K562 (cell line): ENCODE measurements at regions of chrX and their contacts with region 1.

Region 1: DNA sequence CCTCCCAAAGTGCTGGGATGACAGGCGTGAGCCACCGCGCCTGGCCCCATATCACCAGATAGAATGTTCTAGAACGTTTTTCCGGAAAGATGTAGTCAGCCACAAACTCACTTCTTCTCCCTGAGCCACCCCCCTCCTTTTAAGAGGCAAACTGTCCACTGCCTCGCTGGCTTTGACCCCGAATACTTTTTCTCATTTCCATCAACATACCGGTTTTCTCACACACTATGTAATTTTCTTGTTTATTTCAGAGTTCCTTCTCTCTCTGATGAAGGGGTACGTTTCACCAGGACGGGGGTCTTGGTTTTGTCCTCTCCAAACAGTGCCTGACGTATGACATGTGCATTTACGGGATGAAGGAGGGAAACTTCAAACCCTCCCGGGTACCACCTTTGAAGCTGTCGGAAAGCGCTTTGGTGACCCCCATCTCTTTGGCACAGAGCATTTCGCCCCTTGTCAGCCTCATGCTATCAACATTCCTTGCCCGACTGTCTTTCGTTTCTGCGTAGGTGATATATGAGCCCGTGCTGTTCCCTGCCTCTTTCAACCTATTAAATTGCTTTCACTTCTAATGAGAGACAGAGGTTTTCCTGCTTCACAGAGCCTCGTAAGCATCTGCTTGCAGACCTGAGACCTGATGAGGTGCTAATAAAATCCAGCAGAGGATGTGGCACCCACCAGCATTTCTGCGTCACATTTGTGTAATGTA is 73.8 kb downstream of the CRLF2 start:
- DNase-seq: no peak
- ATAC-seq: no peak
- H3K4me3 ChIP-seq: no peak overlapping the region
- H3K27ac ChIP-seq: no peak overlapping the region
- H3K4me1 ChIP-seq: no peaks in the 10 kb centered on the region
- H3K27me3 ChIP-seq: peaks cover 3 to 40% of the 10 kb centered on the region in 2 experiments; a peak in 4 of 5 replicates
- CTCF ChIP-seq: no peak
- EP300 ChIP-seq: no peak
- POLR2A ChIP-seq: no peak
- RAD21 ChIP-seq: no peak

Region 2: DNA sequence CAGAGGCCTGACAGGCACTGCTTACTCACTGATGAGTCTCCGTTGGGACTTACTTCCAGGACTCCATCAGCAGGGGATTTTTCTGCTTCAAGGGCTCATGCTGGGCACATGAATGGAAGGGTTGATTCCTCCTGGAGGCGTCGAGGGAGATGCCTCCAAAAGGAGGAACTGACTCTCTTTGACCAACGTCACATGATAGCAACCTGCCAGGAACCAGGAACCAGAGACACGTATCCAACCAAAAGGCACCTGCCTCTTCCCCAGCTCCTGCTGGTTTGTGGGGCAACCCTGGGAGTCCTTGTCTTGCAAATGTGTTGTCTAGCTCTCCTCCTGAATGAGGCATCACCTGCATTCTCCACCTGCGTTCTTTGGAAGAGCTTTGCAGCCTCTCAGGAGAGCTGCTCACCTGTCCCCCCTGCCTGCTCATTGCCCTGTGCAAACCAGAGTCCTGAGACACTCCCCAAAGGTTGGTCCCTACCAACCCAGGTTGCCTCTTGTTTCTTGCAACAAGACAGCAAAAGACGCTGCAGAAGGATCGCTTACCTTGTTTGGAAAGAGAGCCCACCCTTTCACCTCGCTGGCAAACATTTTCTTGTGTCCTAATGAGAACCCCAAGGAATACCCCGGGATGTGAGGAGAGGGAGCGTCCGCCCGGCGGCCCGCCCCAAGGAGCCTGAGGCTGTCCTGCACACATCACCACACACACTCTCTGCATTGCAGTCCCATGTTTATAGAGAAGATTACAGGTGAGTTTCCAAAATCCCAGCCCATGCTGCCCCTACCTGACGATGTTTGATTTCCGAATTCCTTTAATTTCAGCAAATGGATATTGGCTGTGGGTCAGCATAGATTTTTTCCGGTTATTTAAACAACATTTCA is 538.6 kb before region 1 on chrX:
- CTCF ChIA-PET with region 1: no interaction called
- POLR2A ChIA-PET with region 1: no interaction called
- in situ Hi-C with region 1: loop called (anchors 10 kb)
- intact Hi-C with region 1: no loop called
- DNase-seq: no peak
- ATAC-seq: no peak
- H3K4me3 ChIP-seq: no peak overlapping the region
- H3K27ac ChIP-seq: no peak overlapping the region
- H3K4me1 ChIP-seq: no peaks in the 10 kb centered on the region
- H3K27me3 ChIP-seq: no peaks in the 10 kb centered on the region
- CTCF ChIP-seq: no peak
- EP300 ChIP-seq: no peak
- POLR2A ChIP-seq: no peak
- RAD21 ChIP-seq: no peak

Region 3: GRCh38 chrX:1491851-1492349 is 353.3 kb after region 1 on chrX:
- CTCF ChIA-PET with region 1: no interaction called
- POLR2A ChIA-PET with region 1: no interaction called
- in situ Hi-C with region 1: no loop called
- intact Hi-C with region 1: no loop called
- DNase-seq: peak; percentile 78 to 81 (median 78)
- ATAC-seq: peak; percentile 98
- H3K4me3 ChIP-seq: no peak overlapping the region
- H3K27ac ChIP-seq: no peak overlapping the region
- H3K4me1 ChIP-seq: peaks cover 0 to 7% of the 10 kb centered on the region in 2 experiments; a peak in 4 of 5 replicates
- H3K27me3 ChIP-seq: no peaks in the 10 kb centered on the region
- CTCF ChIP-seq: no peak
- EP300 ChIP-seq: no peak
- POLR2A ChIP-seq: no peak
- RAD21 ChIP-seq: no peak